PC-3 (cell line): ENCODE measurements at regions of chr6 and their contacts with region 1.

Region 1: DNA sequence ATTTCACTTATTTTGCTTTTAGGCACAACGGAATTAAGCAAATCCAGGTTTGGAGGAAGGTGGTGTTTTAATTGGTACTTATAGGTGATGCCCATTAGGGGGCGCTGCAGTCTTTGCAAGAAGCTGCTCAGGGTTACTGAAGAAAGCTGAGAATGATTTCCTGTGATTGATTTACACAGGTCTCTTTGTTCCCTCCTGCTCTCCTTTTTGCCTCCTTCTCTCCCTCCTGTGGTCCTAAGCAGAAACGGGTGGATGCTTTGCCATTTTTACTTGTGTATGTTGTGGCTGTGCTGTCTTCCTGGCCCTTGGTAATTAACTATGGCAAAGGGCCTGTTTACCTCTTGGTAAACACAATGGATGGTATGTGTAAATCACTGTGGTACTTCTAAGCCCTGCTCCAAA is 97.8 kb downstream of the ANKS1A start:
- DNase-seq: peak; percentile 75
- ATAC-seq: peak; percentile 62
- H3K4me3 ChIP-seq: no peak overlapping the region
- H3K27ac ChIP-seq: no peak overlapping the region
- H3K4me1 ChIP-seq: peaks cover 6% of the 10 kb centered on the region; the same call in 1 of the 2 replicates
- H3K27me3 ChIP-seq: no peaks in the 10 kb centered on the region
- CTCF ChIP-seq: peak; percentile 93

Region 2: DNA sequence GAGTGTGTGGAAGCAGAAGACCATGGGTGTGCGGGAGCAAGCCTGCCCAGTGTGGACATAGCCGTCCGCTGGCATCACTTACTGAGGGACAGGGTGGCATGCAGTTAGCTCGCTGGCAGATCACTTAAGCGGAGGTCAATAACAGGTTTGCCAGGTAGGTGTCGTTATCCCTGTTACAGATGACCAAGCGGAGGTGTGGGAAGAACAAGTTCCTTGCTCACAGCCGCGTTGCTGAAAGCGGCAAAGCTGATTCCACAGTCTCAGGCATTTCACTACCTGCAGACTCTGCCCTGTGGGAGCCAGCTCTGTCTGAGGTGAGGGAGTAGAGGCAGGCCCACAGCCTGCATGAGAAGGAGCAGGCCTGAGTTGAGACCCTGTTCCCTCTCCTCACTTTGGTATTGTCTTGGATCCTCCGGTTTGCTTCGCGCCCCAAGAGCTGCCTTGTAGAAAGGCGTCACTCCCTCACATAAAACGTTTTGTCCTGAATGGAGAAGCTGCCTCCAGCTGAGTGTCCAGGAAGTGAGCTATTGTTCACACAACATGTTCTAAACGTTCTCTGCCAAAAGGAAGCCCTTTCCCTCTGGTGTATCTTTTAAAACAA is 57.4 kb after region 1 on chr6:
- CTCF ChIA-PET with region 1: interaction called, 3 read pairs
- POLR2A ChIA-PET with region 1: no interaction called
- intact Hi-C with region 1: loop called (anchors 2 kb)
- DNase-seq: peak; percentile 65
- ATAC-seq: peak; percentile 91
- H3K4me3 ChIP-seq: peak overlapping the region; percentile 4; the same call in 1 of the 2 replicates
- H3K27ac ChIP-seq: peak overlapping the region; percentile 56
- H3K4me1 ChIP-seq: peaks cover 16% of the 10 kb centered on the region
- H3K27me3 ChIP-seq: no peaks in the 10 kb centered on the region
- CTCF ChIP-seq: no peak

Region 3: DNA sequence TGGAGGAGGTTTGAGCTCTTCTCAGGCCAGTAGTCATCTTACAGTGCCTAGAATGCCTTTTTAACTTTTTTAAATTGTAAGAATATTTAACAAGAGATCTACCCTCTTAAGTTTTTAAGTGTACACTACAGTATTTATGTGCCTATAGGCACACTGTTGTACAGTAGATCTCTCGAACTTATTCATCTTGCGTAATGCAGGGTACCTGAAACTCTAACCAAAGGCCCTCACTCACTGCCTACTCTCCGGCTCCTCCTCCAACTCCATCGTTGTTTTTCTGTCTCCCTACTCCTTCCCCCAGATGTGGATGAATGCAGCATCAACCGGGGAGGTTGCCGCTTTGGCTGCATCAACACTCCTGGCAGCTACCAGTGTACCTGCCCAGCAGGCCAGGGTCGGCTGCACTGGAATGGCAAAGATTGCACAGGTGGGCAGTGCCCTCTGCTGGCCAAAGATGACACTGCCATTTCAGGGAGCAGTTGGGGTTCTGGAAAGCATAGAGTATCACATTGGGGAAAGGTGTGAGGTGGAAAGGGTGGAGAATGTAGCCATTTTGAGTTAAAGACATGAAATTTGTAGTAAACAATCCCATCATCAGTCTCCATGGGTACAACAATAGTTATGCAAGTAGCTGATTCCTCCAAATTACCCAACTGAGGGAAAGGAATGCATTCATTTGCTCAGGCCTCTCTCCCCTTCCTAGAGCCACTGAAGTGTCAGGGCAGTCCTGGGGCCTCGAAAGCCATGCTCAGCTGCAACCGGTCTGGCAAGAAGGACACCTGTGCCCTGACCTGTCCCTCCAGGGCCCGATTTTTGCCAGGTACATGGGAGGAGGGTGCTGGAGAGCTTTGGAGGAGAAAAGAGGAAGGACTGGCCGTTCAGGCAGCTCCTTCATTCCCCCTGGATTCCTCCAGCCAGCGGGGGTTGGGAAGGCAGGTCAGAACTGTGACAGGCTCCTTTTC is 254.3 kb after region 1 on chr6:
- CTCF ChIA-PET with region 1: interaction called, 4 read pairs
- POLR2A ChIA-PET with region 1: no interaction called
- intact Hi-C with region 1: loop called (anchors 1 kb)
- DNase-seq: peak; percentile 88
- ATAC-seq: peak; percentile 98
- H3K4me3 ChIP-seq: no peak overlapping the region
- H3K27ac ChIP-seq: no peak overlapping the region
- H3K4me1 ChIP-seq: no peaks in the 10 kb centered on the region; the same call in 1 of the 2 replicates
- H3K27me3 ChIP-seq: no peaks in the 10 kb centered on the region
- CTCF ChIP-seq: peak; percentile 99